ENCODE measurements at regions of chr16 and their contacts with region 1.

Region 1: DNA sequence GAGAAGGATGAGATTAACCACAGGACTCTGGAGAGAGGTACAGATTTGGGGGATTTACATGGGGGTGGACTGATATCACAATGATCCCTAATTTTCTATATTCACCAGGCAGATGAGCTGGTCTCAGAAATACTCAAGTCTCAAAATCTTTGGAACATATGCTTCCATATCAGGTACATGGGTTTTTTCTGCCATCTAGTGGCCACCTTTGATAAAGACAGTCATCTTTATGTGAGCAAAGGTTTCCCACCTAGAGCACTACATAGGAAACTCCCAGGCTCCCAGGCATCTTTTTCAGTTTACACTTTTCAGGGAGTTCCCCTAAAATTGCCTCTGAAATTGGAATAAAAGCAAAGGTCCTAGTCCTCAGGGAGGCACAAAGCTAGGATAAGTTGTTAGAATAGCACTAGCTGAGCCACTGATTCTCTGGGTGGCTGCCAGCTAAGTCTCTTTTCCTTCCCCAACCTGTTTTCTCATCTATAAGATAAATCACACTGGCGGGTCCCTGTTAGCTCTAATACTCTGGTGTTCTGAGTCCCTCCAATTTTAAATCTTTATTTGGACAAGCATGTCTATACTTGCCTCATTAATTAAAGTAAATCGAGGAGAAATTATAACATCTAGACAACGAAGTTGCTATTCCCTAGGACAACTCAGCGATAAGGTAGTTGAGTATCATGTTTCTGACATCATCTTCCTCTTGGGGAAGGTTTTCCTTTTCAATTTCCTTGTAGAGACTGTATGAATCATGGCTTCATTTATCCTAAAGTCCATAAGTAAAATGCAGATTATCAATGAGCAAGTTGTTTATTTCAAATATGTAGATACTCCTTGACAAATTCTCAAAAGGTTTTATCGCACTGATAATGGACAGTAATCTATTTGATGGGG is 19.0 kb upstream of the MON1B start:
- DNase-seq: peak; percentile 55 to 73 (median 60)
- ATAC-seq: peak; percentile 87
- H3K4me3 ChIP-seq: no peak overlapping the region
- H3K27ac ChIP-seq: no peak overlapping the region
- H3K4me1 ChIP-seq: no peaks in the 10 kb centered on the region
- H3K27me3 ChIP-seq: no peaks in the 10 kb centered on the region; a peak in 1 of 5 replicates
- CTCF ChIP-seq: peak; percentile 52 to 75 (median 63); a peak in 5 of 6 replicates
- EP300 ChIP-seq: no peak
- POLR2A ChIP-seq: no peak
- RAD21 ChIP-seq: peak; percentile 71 to 83

Region 2: DNA sequence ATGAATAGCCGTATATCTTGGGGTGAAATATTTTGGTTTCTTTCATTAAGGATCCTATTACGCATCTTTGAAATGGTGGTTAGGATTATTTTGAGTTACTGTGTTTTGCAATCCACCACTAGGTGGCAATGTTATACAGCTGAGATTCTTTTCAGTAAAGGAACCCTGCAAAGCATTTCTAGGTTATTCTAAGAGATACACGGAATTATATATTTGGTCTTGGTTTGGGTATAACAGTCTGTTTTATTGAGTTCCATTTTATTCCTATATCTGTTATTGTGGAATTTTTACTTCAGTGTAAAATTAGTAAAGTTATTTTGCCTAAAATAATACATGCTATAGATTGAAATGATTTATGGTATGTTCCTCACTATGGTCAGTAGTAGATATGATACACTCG is 1382.8 kb before region 1 on chr16:
- CTCF ChIA-PET with region 1: interaction called, 23 read pairs
- POLR2A ChIA-PET with region 1: no interaction called
- in situ Hi-C with region 1: loop called (anchors 5 kb)
- intact Hi-C with region 1: loop called (anchors 1 kb)
- DNase-seq: peak; percentile 39 to 61 (median 49)
- ATAC-seq: peak; percentile 89
- H3K4me3 ChIP-seq: no peak overlapping the region
- H3K27ac ChIP-seq: no peak overlapping the region
- H3K4me1 ChIP-seq: no peaks in the 10 kb centered on the region
- H3K27me3 ChIP-seq: no peaks in the 10 kb centered on the region
- CTCF ChIP-seq: peak; percentile 55 to 89 (median 57); a peak in 5 of 6 replicates
- EP300 ChIP-seq: no peak
- POLR2A ChIP-seq: no peak
- RAD21 ChIP-seq: peak; percentile 78 to 93

Region 3: DNA sequence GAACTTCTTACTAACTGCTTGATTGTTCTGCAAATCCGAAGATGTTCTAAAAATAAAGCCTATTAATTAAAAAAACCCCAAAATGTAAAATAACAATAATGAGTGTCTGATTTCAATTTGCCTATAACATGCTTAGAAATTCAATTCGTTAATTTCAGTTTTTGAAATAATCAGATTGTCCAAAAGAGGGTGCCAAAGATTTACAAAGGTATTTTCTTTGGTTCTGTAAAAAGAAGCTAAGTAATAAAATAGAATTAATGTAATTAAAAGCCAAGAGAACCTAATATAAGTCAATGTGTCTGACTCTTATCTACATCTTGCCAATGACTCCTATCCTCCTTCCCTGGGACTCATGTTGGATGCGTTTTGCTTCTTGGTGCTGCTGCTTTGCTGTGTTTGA is 1370.7 kb before region 1 on chr16:
- CTCF ChIA-PET with region 1: interaction called, 7 read pairs
- POLR2A ChIA-PET with region 1: no interaction called
- in situ Hi-C with region 1: no loop called
- intact Hi-C with region 1: loop called (anchors 1 kb)
- DNase-seq: no peak
- ATAC-seq: no peak
- H3K4me3 ChIP-seq: no peak overlapping the region
- H3K27ac ChIP-seq: no peak overlapping the region
- H3K4me1 ChIP-seq: no peaks in the 10 kb centered on the region
- H3K27me3 ChIP-seq: peaks cover 0 to 5% of the 10 kb centered on the region in 2 experiments; a peak in 1 of 5 replicates
- CTCF ChIP-seq: peak in 1 of 3 experiments; percentile 53; a peak in 2 of 6 replicates
- EP300 ChIP-seq: no peak
- POLR2A ChIP-seq: no peak
- RAD21 ChIP-seq: peak; percentile 61 to 66

Region 4: GRCh38 chr16:76653390-76654026 is 518.5 kb before region 1 on chr16:
- CTCF ChIA-PET with region 1: no interaction called
- POLR2A ChIA-PET with region 1: no interaction called
- in situ Hi-C with region 1: loop called (anchors 25 kb)
- intact Hi-C with region 1: no loop called
- DNase-seq: peak; percentile 8 to 48 (median 22)
- ATAC-seq: peak; percentile 85
- H3K4me3 ChIP-seq: no peak overlapping the region
- H3K27ac ChIP-seq: no peak overlapping the region
- H3K4me1 ChIP-seq: no peaks in the 10 kb centered on the region
- H3K27me3 ChIP-seq: no peaks in the 10 kb centered on the region
- CTCF ChIP-seq: peak; percentile 41 to 65 (median 41); a peak in 5 of 6 replicates
- EP300 ChIP-seq: no peak
- POLR2A ChIP-seq: no peak
- RAD21 ChIP-seq: peak; percentile 60 to 71

Region 5: GRCh38 chr16:76668207-76668725 is 503.7 kb before region 1 on chr16:
- CTCF ChIA-PET with region 1: no interaction called
- POLR2A ChIA-PET with region 1: no interaction called
- in situ Hi-C with region 1: loop called (anchors 25 kb)
- intact Hi-C with region 1: loop called (anchors 10 kb)
- DNase-seq: peak; percentile 8 to 58 (median 22)
- ATAC-seq: peak; percentile 80
- H3K4me3 ChIP-seq: no peak overlapping the region
- H3K27ac ChIP-seq: no peak overlapping the region
- H3K4me1 ChIP-seq: no peaks in the 10 kb centered on the region
- H3K27me3 ChIP-seq: no peaks in the 10 kb centered on the region
- CTCF ChIP-seq: peak in 2 of 3 experiments; percentile 5 to 28; a peak in 1 of 6 replicates
- EP300 ChIP-seq: no peak
- POLR2A ChIP-seq: no peak
- RAD21 ChIP-seq: peak in 1 of 2 experiments; percentile 3; a peak in 1 of 4 replicates

Region 6: GRCh38 chr16:76910931-76911330 is 261.1 kb before region 1 on chr16:
- CTCF ChIA-PET with region 1: no interaction called
- POLR2A ChIA-PET with region 1: no interaction called
- in situ Hi-C with region 1: no loop called
- intact Hi-C with region 1: no loop called
- DNase-seq: no peak
- ATAC-seq: no peak
- H3K4me3 ChIP-seq: no peak overlapping the region
- H3K27ac ChIP-seq: no peak overlapping the region
- H3K4me1 ChIP-seq: no peaks in the 10 kb centered on the region
- H3K27me3 ChIP-seq: no peaks in the 10 kb centered on the region
- CTCF ChIP-seq: no peak
- EP300 ChIP-seq: no peak
- POLR2A ChIP-seq: no peak
- RAD21 ChIP-seq: no peak